ENCODE measurements at regions of chr2 and their contacts with region 1.

Region 1: GRCh38 chr2:105454801-105455485 is 56.1 kb upstream of the FHL2 start:
- DNase-seq: peak; percentile 89
- H3K4me3 ChIP-seq: no peak overlapping the region
- H3K27ac ChIP-seq: peak overlapping the region; percentile 97
- H3K4me1 ChIP-seq: peaks cover 24% of the 10 kb centered on the region
- H3K27me3 ChIP-seq: no peaks in the 10 kb centered on the region
- CTCF ChIP-seq: peak; percentile 54 to 71

Region 2: GRCh38 chr2:105397964-105398698 is 56.8 kb before region 1 on chr2:
- CTCF ChIA-PET with region 1: no interaction called
- dilution Hi-C with region 1: no loop called
- in situ Hi-C with region 1: loop called (anchors 5 kb)
- intact Hi-C with region 1: loop called (anchors 1 kb)
- DNase-seq: no peak
- H3K4me3 ChIP-seq: peak overlapping the region; percentile 96 to 98 (median 96)
- H3K27ac ChIP-seq: peak overlapping the region; percentile 92
- H3K4me1 ChIP-seq: peaks cover 45% of the 10 kb centered on the region
- H3K27me3 ChIP-seq: no peaks in the 10 kb centered on the region
- CTCF ChIP-seq: peak in 1 of 2 donors; percentile 12

Region 3: GRCh38 chr2:105409717-105410116 is 45.2 kb before region 1 on chr2:
- CTCF ChIA-PET with region 1: interaction called, 4 read pairs
- dilution Hi-C with region 1: no loop called
- in situ Hi-C with region 1: loop called (anchors 5 kb)
- intact Hi-C with region 1: loop called (anchors 1 kb)
- DNase-seq: peak; percentile 93
- H3K4me3 ChIP-seq: peak overlapping the region in 1 of 3 experiments; percentile 19
- H3K27ac ChIP-seq: peak overlapping the region; percentile 89
- H3K4me1 ChIP-seq: peaks cover 70% of the 10 kb centered on the region
- H3K27me3 ChIP-seq: no peaks in the 10 kb centered on the region
- CTCF ChIP-seq: peak in 1 of 2 donors; percentile 7

Region 4: DNA sequence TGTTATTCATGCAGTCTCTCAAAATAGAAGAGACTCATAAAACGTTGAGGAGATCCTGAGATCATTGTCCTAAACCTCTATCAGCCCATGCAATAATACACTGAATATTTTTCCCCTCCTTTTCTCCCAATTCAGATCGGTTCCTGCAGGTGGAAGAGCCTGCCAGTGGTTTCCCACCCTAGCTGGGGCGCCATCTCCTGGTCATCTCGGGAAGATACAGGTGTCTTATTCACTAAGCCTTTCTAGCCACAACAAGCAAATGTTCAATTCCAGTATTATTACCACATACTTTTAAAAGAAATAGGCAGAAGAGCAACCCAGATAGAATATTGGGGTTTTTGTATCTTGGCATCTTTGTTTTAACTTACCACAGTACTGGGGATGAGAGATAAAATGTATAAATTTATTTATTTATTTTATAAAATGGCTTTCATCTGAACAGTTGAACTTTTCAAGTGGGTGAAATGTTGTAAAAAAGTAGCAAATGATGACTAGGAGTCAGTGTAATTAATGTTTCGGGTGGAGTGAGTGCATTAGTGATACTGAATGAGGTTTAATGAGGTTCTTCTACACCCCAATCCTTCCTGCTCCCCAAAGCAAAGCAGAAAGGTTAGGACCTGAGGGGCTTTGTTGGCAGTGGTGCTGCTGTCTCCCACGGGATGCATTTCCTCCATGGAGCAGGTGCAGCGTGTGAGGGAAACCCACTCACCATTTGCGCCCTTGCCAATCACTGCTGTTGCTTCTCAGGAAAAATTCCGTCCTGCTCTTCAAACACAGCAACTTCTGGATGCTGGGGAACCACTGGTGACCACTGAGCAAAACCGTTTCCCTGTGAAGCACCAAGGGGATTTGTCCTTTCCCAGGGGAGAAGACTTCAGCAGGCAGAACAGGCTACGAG is 91.0 kb after region 1 on chr2:
- CTCF ChIA-PET with region 1: no interaction called
- dilution Hi-C with region 1: no loop called
- in situ Hi-C with region 1: no loop called
- intact Hi-C with region 1: loop called (anchors 2 kb)
- DNase-seq: peak; percentile 44
- H3K4me3 ChIP-seq: no peak overlapping the region
- H3K27ac ChIP-seq: no peak overlapping the region
- H3K4me1 ChIP-seq: peaks cover 11% of the 10 kb centered on the region
- H3K27me3 ChIP-seq: no peaks in the 10 kb centered on the region
- CTCF ChIP-seq: peak; percentile 87 to 89

Measured in mammary epithelial cell (primary cell).